ENCODE measurements at regions of chr1 and their contacts with region 1.

Region 1: DNA sequence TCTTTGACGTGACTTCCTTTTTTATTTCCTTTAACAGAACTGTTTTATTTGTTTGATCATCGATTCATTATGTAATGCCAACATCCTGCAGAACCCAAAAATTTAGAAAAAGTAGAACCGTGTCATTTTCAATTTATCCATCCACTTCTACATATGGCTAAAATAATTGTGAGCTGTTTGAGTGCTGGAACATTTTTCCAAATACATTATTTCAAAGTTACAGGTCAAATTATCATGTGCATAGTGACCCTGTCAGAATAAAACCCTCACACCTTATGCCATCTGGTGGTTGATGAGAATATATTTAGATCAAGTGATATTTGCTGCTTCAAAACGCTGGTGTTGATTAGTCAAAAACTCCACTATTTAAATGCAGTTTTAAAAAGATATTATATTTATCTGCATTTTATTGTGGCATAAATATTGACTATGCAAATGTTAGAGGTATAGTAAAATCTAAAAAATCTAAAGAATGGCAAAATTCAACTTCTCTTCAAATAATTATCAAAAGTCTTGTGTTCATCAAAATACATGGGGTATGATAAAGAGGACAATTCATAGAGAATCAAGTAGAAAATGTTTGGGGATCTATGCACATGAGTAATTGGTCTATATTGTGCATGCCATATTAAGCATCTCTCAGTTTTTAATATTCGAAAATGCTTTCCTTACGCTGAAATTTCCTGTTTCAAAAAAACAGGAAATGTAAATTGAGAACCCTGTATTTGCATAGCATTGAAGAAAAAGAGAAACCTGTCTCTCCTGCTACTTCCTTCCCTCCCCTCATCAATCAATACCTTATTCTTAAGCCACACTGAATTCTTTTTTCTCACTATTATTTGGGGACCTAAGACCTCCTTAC is 39.7 kb downstream of the UBE2U start:
- DNase-seq: no peak
- ATAC-seq: peak; percentile 44 to 60

Region 2: DNA sequence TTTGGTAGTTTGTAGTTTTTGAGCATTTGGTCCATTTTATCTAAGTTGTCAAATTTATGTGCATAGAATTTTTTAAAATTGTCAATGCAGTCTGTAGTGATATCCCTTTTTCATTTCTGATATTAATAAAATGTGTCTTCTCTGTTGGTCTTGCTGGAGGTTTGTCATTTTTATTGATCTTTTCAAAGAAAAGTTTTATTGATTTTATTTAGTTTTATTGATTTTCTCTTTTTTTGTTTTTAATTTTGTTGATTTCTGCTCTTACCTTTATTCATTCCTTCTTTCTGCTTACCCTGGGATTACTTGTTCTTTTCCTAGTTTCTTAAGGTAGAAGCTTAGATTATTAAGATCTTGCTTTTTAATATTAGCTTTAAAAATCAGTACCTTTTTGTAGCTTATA is 657.9 kb before region 1 on chr1:
- intact Hi-C with region 1: loop called in 1 of 2 experiments (anchors 10 kb)
- DNase-seq: no peak
- ATAC-seq: no peak

Region 3: GRCh38 chr1:63615768-63616420 is 627.2 kb before region 1 on chr1:
- intact Hi-C with region 1: loop called in 1 of 2 experiments (anchors 2 kb)
- DNase-seq: peak; percentile 34
- ATAC-seq: peak; percentile 69 to 79

Region 4: DNA sequence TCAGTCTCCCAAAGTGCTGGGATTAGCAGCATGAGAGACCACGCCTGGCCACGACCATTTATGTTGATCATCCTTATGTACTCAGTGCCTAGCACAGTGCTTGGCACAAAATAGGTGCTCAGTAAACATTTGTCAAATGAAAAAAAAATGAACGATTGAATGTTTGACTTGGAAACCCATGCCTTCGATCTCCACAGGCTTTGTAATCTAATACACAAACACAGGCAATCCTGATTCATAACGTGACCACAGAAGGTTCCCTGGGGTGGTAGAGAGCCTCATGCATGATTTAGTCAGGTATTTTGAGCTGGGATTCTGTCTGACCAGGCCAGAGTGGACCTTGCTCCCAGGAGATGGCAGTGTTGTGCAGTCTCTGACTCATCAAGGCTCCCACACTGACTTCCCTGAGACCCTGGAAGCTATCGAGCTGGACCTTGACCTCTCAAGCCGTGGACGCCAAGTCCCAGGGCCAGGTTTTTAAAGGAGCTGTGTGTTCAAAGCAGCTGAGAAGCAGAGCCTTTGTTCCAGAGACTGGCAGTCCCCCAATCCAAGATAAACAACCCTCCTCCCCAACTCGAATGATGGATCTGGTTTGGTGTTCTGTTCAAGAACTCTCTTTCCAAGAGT is 568.8 kb before region 1 on chr1:
- intact Hi-C with region 1: loop called (anchors 2 to 10 kb)
- DNase-seq: peak; percentile 77
- ATAC-seq: peak; percentile 87 to 95

Region 5: DNA sequence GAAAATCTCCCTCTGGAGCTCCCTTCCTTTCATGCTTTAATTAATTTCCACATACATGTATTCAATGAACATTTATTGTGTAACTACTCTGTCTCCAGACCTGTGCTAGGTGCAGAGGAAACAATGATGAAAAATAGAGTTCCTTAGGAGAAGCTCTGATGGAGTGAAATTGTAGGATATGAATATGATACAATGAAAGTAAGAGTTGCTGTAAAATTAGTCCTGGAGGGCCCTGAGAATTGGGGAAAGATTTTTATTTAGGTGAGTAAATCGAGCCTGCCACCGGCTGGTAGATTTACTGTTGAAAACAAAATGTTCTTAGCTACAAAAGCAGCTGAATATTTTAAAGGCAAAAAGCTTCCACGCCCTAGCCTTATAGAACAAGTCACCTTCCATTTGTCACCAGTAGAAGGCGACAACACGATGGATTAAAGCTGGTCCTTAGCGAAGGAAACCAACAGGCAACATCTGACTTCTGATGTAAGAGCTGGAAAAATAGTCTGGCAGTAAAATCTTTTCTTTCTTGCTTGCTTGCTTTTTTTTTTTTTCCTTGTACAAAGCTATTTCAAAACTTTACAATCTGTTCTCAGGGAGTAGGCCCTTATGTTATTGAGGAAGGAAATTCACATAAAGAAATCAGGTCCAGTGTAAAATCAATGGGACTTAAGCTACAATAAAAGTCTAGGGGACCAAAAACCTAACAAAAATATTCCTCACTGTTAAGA is 551.3 kb before region 1 on chr1:
- intact Hi-C with region 1: loop called in 1 of 2 experiments (anchors 5 kb)
- DNase-seq: peak; percentile 37
- ATAC-seq: peak; percentile 83 to 90

Region 6: DNA sequence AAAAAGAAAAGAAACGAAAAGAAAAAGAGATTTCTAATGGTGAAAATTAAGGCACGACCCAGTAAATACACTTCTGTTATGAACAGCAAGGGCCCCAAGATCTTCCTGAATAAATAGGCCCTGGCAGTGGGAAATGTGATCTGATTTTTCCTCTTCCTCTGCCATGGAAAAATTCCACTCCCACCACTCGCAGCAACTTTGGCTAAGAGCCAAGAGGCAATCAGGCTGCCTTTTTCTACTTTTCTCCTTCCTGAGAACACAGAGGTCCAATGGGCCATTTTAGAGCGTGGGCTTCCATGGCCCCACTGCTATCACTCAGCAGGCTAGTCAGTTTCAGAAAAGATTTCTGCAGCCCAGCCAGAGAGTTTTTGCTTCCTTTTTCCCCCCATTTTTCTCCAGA is 871.2 kb after region 1 on chr1:
- intact Hi-C with region 1: no loop called
- DNase-seq: peak; percentile 52
- ATAC-seq: peak; percentile 52 to 57

Measured in left cardiac atrium (tissue), 4 donors.